Left cardiac atrium (tissue), 4 donors: ENCODE measurements at regions of chr17 and their contacts with region 1.

Region 1: DNA sequence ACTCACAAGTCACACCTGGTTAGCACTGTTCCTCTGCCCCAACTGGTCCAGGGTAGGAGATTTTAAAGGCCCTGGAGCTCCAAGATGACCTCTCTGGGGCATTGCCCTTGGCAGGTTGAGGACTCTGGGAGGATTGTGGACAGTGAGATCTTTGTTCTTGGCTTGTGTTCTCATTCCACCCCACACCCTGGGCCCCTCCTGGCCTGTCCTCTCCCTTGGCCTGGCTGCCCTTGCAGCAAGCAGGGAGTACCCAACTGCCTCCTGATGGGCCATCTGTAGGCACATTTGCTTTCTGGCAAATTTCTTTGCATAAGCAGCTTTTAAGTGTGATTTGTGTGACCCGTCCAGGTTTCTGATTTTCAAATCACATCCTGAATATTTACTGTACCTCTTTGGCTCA is 239.6 kb downstream of the UTP18 start:
- DNase-seq: no peak
- ATAC-seq: no peak

Region 2: GRCh38 chr17:51572115-51572514 is 72.2 kb after region 1 on chr17:
- intact Hi-C with region 1: loop called in 1 of 2 experiments (anchors 10 kb)
- DNase-seq: no peak
- ATAC-seq: no peak

Region 3: GRCh38 chr17:51590066-51590656 is 90.3 kb after region 1 on chr17:
- intact Hi-C with region 1: no loop called
- DNase-seq: no peak
- ATAC-seq: peak; percentile 41 to 53

Region 4: DNA sequence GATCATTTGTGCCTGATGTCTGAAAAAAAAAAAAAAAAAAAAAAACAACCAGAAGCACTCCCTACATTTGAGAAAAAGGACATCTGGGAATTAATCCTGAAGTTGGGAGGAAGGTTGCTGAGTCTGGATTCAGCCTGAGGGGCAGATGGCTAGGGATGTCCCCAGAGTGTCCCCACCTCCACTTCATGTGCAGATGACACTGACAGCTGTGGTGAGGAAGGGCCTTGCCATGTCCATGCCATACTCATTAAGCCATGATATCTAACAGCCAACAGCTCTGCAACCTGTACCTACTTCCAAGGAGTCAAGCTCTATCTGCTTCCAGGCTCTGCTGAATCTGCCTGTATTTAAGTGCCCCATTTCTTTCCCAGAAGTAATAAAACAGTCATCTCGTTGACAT is 302.6 kb after region 1 on chr17:
- intact Hi-C with region 1: no loop called
- DNase-seq: no peak
- ATAC-seq: no peak